SK-N-SH (cell line): ENCODE measurements at regions of chr6 and their contacts with region 1.

Region 1: DNA sequence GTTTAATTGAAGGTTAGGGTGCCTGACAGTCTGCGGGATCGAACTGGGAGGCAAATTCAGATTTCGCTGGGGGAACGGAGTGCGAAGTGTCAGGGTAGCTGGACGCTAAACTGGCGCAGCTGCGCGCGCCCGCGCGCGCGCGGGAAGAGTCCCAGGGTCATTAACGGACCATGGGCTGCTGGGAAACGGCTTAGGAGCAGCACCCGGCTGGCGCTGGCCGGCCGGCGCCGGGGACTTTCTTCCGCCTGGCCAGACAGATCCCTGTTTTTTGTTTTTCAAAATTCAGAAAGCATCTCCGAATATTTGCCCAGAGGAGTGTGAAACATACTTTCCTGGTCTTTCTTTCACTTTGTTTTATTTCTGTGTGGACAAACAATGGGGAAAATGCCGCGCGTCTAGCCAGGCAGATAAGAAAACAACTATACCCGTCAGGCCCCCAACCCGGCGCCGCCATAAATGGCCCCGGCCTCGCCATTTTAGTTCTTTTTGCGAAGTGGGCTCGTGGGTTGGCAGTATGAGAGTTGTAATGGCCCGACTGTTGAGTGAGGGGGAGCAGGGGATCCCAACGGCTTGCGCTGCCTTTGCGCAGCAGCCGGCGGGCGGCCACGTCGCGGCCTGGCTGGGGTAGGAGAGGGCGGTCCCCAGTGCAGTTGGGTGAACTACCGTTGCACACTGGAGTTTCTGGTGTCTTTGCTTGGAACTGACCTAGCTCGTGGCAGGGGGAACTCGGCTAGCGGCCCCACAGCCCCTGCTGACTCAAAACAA is 7.1 kb downstream of the HSPA1B start:
- DNase-seq: peak; percentile 95
- H3K4me3 ChIP-seq: peak overlapping the region; percentile 66 to 96
- H3K27ac ChIP-seq: peak overlapping the region; percentile 90
- H3K4me1 ChIP-seq: peaks cover 18 to 27% of the 10 kb centered on the region in 2 experiments; a peak in 2 of 4 replicates
- H3K27me3 ChIP-seq: no peaks in the 10 kb centered on the region
- CTCF ChIP-seq: no peak
- EP300 ChIP-seq: no peak
- RAD21 ChIP-seq: no peak

Region 2: GRCh38 chr6:31862344-31863227 is 28.0 kb after region 1 on chr6 and contains the start of gene NEU1:
- CTCF ChIA-PET with region 1: interaction called, 4 read pairs
- POLR2A ChIA-PET with region 1: interaction called, 16 read pairs
- DNase-seq: peak; percentile 97
- H3K4me3 ChIP-seq: peak within 1 kb of the TSS; percentile 78 to 98
- H3K27ac ChIP-seq: peak within 1 kb of the TSS; percentile 79 to 81
- H3K4me1 ChIP-seq: peaks cover 0 to 14% of the 10 kb centered on the region in 2 experiments; a peak in 1 of 4 replicates
- H3K27me3 ChIP-seq: no peaks in the 10 kb centered on the region
- CTCF ChIP-seq: no peak
- EP300 ChIP-seq: 0 out of 4 replicates have a peak, but pooled peaks of 1 of the 2 experiments have one; percentile 12
- RAD21 ChIP-seq: no peak
- polyA plus RNA-seq, gene NEU1: 42.2 and 43.0 TPM in 2 replicates

Region 3: GRCh38 chr6:32087574-32088486 is 253.2 kb after region 1 on chr6:
- CTCF ChIA-PET with region 1: no interaction called
- POLR2A ChIA-PET with region 1: no interaction called
- DNase-seq: peak; percentile 81
- H3K4me3 ChIP-seq: no peak overlapping the region
- H3K27ac ChIP-seq: no peak overlapping the region
- H3K4me1 ChIP-seq: peaks cover 0 to 8% of the 10 kb centered on the region in 2 experiments; a peak in 2 of 4 replicates
- H3K27me3 ChIP-seq: peaks cover 47% of the 10 kb centered on the region
- CTCF ChIP-seq: peak; percentile 43
- EP300 ChIP-seq: no peak
- RAD21 ChIP-seq: peak; percentile 57